ENCODE measurements at regions of chr3 and their contacts with region 1.

Region 1: GRCh38 chr3:75814797-75815196 is 29.4 kb upstream of the ZNF717 start:
- DNase-seq: no peak
- ATAC-seq: no peak
- H3K4me3 ChIP-seq: no peak overlapping the region
- H3K27ac ChIP-seq: no peak overlapping the region
- H3K4me1 ChIP-seq: no peaks in the 10 kb centered on the region
- H3K27me3 ChIP-seq: no peaks in the 10 kb centered on the region
- CTCF ChIP-seq: no peak

Region 2: DNA sequence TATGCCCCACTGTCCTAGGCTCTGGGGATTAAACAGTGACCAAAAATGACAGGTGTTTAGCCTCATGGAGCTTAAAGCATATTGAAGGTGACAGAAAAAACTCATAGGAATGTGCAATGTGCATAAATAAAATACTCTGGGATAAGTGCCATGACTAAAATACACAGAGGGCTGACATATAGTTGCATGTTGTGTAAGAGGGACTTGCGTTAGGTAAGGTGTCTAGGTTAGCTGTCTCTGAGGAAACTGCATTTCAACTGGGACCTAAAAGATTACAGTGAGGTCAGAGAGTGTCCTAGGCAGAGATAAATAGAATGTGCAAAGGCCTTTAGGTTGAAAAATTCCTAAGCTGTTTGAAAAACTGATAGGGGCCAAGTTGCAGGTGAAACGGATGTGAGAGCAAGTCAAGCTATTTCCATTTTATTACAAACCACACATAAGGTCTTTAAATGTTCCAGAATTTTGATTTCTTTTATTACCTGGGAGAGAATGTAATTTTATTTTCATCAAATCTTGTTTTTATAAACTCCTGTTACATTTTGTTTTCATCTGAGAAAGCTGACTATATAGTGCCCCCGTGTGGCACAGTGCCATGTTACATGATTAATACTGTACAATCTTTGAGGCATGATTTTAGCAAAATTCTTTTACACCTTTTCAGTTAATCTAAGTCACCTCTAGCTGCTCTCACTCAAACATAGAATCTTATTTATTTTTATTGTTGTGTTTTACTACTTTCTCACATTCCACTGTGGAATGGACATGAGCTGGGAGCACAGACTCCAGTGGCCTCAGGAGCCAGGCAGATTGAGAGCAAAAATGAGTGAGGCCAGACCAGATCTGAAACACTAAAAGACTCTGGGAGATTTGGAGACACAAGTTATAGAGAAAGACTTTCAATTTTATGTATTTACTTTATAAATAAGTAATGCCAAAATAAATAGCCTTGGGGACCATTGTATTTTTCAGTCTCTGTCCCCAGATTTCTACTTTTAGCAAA is 230.1 kb after region 1 on chr3:
- CTCF ChIA-PET with region 1: no interaction called
- POLR2A ChIA-PET with region 1: no interaction called
- intact Hi-C with region 1: loop called (anchors 1 kb)
- DNase-seq: peak; percentile 69
- ATAC-seq: peak; percentile 60
- H3K4me3 ChIP-seq: no peak overlapping the region
- H3K27ac ChIP-seq: no peak overlapping the region
- H3K4me1 ChIP-seq: peaks cover 6% of the 10 kb centered on the region
- H3K27me3 ChIP-seq: no peaks in the 10 kb centered on the region
- CTCF ChIP-seq: peak; percentile 88

Region 3: DNA sequence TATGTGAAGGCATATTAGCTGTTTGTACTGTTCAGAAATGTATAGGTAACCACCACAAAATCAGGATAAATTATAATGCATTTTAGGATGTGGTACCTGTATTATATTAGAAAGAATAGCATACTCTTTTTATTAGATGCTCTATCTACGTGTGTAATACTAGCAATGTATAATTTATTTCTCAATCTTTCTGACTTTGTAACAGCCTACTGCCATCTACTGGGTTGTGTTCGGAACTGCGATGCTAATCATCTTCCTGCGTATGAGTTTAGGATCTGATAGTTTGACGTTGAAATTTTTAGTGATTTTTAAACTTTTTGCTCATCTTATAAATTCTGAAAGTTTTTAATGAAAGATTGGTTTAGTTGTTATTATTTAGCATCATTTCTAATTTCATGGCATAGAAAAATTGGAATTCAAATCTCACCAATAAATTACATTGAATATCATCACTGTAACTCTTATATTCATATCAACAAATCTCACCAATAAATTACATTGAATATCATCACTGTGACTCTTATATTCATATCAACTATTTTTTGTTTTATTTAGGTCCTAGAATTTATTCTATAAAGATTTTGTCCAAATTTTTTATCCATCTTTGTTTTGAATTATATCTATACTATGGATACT is 293.3 kb after region 1 on chr3:
- CTCF ChIA-PET with region 1: no interaction called
- POLR2A ChIA-PET with region 1: no interaction called
- intact Hi-C with region 1: loop called (anchors 1 kb)
- DNase-seq: peak; percentile 72
- ATAC-seq: peak; percentile 75
- H3K4me3 ChIP-seq: no peak overlapping the region
- H3K27ac ChIP-seq: no peak overlapping the region
- H3K4me1 ChIP-seq: no peaks in the 10 kb centered on the region
- H3K27me3 ChIP-seq: no peaks in the 10 kb centered on the region
- CTCF ChIP-seq: peak; percentile 93

Region 4: GRCh38 chr3:76585794-76586392 is 771.1 kb after region 1 on chr3:
- CTCF ChIA-PET with region 1: no interaction called
- POLR2A ChIA-PET with region 1: no interaction called
- intact Hi-C with region 1: loop called (anchors 5 kb)
- DNase-seq: peak; percentile 50
- ATAC-seq: no peak
- H3K4me3 ChIP-seq: no peak overlapping the region
- H3K27ac ChIP-seq: no peak overlapping the region
- H3K4me1 ChIP-seq: no peaks in the 10 kb centered on the region
- H3K27me3 ChIP-seq: no peaks in the 10 kb centered on the region
- CTCF ChIP-seq: peak; percentile 83